ENCODE measurements at regions of chr3 and their contacts with region 1.

Region 1: DNA sequence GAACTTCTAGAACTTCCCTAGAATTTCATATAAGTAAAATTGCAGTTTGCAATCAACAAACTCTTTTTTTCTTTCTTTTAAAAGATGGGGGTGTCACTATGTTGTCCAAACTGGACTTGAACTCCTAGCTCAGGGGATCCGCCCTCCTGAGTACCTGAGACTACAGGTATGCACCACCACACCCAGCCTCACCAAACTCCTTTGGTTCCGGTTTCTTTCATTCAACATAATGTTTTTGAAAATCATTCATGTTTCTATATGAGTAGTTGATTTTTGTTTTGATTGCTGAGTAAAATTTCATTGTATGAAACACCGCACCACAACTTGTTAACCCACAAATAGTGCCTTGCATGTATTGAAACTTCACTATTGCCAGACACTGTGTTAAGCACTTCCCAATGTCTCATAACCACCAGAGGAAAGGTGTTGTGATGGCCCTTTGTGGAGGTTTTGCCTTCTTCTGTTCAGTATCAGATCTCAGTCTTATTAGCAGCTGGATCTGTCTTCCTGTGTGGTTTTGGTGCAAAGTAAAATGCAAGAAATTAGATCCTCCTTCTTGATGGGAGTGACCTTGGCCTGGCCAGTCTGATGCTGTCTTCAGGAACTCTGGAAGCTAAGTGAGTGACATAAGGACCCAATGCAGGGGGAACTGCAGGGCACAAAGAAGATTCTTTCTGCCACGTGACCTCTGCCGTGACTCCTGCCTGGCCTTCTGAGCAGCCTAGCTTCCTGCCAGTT is 78.8 kb upstream of the UBE2E1 start:
- DNase-seq: no peak
- ATAC-seq: no peak
- H3K4me3 ChIP-seq: no peak overlapping the region
- H3K27ac ChIP-seq: no peak overlapping the region
- H3K4me1 ChIP-seq: peaks cover 13% of the 10 kb centered on the region
- H3K27me3 ChIP-seq: peaks cover 2% of the 10 kb centered on the region
- CTCF ChIP-seq: no peak
- POLR2A ChIP-seq: no peak
- RAD21 ChIP-seq: no peak

Region 2: DNA sequence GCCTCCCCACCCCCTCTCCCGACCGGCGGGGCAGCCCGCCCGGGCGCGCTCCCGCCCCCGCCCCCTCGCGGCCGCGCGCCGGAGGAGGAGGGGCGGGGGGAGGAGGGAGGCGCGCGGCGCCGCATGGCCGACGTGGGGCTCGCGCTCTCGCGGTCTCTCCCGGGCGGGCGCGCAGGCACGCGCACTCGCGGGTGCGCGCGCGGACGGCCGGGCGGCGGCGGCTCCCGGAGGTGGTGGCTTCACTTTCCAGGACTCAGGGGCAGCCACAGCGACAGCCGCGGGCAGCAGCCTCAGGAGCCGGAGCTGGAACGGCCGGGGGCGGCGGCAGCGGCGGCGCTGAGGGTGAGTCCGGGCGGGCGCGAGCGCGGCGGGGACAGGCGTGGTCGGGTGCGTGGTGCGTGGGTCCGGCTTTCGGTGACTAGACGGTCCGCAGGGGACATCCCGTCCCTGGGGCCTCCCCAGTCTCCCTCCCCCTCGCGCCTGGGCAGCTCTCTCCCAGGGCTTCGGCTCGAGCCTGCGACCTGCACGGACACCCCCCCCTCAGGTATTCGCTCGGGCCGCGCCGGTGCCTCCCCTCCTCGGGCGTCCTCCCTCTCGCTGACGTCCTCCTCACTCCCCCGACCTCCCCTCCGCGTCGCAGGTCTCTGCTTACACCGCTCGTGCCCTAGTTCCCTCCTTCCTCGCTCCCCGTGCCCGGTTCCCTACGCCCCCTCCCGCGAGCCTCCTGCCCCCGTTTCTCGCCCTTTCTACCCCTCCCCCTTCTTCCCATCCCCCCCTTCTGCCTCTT is 523.9 kb before region 1 on chr3 and contains the start of gene UBE2E2:
- CTCF ChIA-PET with region 1: no interaction called
- POLR2A ChIA-PET with region 1: no interaction called
- dilution Hi-C with region 1: no loop called
- in situ Hi-C with region 1: no loop called
- intact Hi-C with region 1: loop called (anchors 5 kb)
- DNase-seq: peak; percentile 66
- ATAC-seq: peak; percentile 81
- H3K4me3 ChIP-seq: peak within 1 kb of the TSS; percentile 91
- H3K27ac ChIP-seq: peak within 1 kb of the TSS; percentile 67
- H3K4me1 ChIP-seq: no peaks in the 10 kb centered on the region; the same call in 1 of the 2 replicates
- H3K27me3 ChIP-seq: peaks cover 11% of the 10 kb centered on the region
- CTCF ChIP-seq: no peak
- POLR2A ChIP-seq: peak; percentile 59; the same call in 1 of the 2 replicates
- RAD21 ChIP-seq: no peak
- total RNA-seq, gene UBE2E2: 18.6 and 18.9 TPM in 2 replicates